ENCODE measurements at regions of chr9 and their contacts with region 1.

Region 1: GRCh38 chr9:4077499-4078102 is 222.3 kb downstream of the GLIS3 start:
- DNase-seq: no peak
- H3K4me3 ChIP-seq: no peak overlapping the region
- H3K27ac ChIP-seq: no peak overlapping the region
- H3K4me1 ChIP-seq: peaks cover 16% of the 10 kb centered on the region
- H3K27me3 ChIP-seq: no peaks in the 10 kb centered on the region
- CTCF ChIP-seq: peak; percentile 16 to 46 (median 30)
- POLR2A ChIP-seq: no peak

Region 2: GRCh38 chr9:3857673-3858072 is 219.9 kb before region 1 on chr9:
- intact Hi-C with region 1: no loop called
- DNase-seq: no peak
- H3K4me3 ChIP-seq: no peak overlapping the region
- H3K27ac ChIP-seq: no peak overlapping the region
- H3K4me1 ChIP-seq: peaks cover 2% of the 10 kb centered on the region
- H3K27me3 ChIP-seq: no peaks in the 10 kb centered on the region
- CTCF ChIP-seq: no peak
- POLR2A ChIP-seq: no peak

Region 3: GRCh38 chr9:3880851-3881250 is 196.8 kb before region 1 on chr9:
- intact Hi-C with region 1: no loop called
- DNase-seq: no peak
- H3K4me3 ChIP-seq: no peak overlapping the region
- H3K27ac ChIP-seq: no peak overlapping the region
- H3K4me1 ChIP-seq: peaks cover under 1% of the 10 kb centered on the region
- H3K27me3 ChIP-seq: no peaks in the 10 kb centered on the region
- CTCF ChIP-seq: no peak
- POLR2A ChIP-seq: no peak

Region 4: GRCh38 chr9:4235871-4236804 is 158.5 kb after region 1 on chr9:
- intact Hi-C with region 1: no loop called
- DNase-seq: no peak
- H3K4me3 ChIP-seq: no peak overlapping the region
- H3K27ac ChIP-seq: peak overlapping the region; percentile 36
- H3K4me1 ChIP-seq: peaks cover 15% of the 10 kb centered on the region
- H3K27me3 ChIP-seq: no peaks in the 10 kb centered on the region
- CTCF ChIP-seq: no peak
- POLR2A ChIP-seq: no peak

Region 5: DNA sequence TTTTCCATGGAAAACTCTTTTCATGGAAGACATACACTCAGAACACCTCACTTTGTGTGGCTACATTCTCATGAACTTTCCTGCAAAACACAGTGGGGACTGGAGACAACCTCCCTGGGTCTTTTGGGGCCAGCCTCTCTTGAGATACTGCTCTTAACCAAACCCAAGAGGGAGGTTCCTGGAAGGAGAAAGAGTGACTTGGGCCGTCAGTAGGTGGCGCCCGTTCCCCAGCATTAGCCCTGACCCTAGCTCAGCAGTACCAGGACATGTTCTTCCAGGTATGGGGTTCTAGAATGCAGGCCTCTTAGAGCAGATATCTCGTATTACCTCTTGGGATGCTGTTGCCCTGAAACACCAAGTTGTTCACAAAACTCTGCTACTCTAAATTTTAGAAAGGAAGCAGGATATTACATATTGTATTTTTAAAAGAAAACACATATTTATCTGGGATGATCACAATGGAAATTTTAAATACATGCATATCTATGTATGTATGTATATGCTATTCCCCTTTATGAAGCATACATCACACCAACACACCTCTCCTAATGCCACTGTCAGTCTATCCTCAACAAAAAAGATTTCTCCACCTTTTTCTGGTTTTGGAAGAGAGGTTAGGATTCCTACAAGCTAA is 238.1 kb after region 1 on chr9:
- intact Hi-C with region 1: loop called (anchors 10 kb)
- DNase-seq: no peak
- H3K4me3 ChIP-seq: no peak overlapping the region
- H3K27ac ChIP-seq: no peak overlapping the region
- H3K4me1 ChIP-seq: no peaks in the 10 kb centered on the region
- H3K27me3 ChIP-seq: no peaks in the 10 kb centered on the region
- CTCF ChIP-seq: peak; percentile 39 to 63 (median 56)
- POLR2A ChIP-seq: no peak

Measured in vagina (tissue), 2 donors.